K562 (cell line): ENCODE measurements at regions of chr22 and their contacts with region 1.

Region 1: DNA sequence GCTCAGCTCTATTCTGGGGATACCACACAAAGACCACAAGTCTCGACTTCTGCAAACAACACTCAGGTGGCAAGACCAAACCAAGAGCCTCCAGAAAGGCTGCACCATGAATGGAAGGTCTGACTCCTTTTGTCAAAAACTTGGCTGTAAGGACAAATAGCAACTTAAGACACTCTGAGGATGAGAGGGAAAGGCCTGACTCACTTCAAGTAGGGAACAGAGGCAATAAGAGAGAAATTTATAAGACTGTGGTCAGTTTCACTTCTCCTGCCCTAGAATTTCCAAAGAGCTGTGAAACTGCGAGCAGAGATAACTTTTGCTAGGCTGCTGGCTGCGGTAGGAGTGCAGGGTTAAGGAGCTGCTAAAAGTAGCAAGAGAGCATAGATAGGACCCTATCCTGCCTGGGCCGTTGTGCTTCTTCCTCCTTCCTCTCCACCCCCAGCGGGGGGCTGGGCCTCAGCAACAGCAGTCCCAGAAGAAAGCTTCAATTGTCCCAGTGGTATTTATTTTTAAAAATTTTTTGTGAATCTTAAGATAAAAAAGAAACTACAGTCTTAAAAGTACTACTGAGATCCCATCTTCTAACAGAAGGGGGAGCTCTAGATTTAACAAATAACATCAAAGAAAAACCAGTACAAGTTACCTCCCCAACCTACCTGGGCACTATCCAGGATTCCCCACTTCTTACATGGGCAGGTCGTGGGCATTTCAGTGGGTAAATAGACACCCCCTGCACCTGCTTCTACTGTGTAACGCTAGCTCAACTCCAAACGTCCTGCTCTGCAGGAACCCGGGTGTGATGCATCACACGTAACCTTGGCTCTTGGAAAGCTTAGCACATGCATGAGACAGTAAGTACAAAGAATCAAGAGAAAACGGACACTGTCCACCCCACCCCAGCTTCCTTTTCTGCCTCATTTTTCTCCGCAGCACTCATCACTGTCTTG is 66.4 kb downstream of the SGSM3 start:
- DNase-seq: peak; percentile 57 to 84 (median 65)
- ATAC-seq: peak; percentile 95
- H3K4me3 ChIP-seq: no peak overlapping the region
- H3K27ac ChIP-seq: peak overlapping the region; percentile 81
- H3K4me1 ChIP-seq: peaks cover 0 to 23% of the 10 kb centered on the region in 2 experiments; a peak in 4 of 5 replicates
- H3K27me3 ChIP-seq: no peaks in the 10 kb centered on the region
- CTCF ChIP-seq: peak in 2 of 3 experiments; percentile 50 to 57; a peak in 2 of 6 replicates
- EP300 ChIP-seq: peak; percentile 22; the same call in 1 of the 2 replicates
- POLR2A ChIP-seq: no peak
- RAD21 ChIP-seq: peak; percentile 59 to 64

Region 2: DNA sequence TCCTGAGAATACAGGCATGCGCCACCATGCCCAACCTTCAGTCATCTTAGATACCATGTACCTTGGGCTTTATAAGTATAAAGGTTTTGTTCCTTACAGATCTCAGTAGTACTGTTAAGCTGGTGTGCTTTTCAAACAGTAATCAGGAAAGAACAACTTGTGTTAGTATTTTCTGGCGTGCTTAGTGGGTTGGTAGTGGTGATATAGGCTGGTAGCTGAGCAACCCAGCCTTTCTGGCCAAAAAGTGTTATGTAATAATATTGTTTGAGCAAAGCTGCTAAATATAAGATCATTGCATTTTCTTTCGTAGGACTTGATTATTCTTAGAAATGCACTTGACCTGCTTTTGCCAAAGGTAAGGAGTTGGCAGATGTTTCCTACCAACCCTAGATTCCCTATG is 84.0 kb before region 1 on chr22:
- CTCF ChIA-PET with region 1: no interaction called
- POLR2A ChIA-PET with region 1: no interaction called
- in situ Hi-C with region 1: no loop called
- intact Hi-C with region 1: no loop called
- DNase-seq: no peak
- ATAC-seq: no peak
- H3K4me3 ChIP-seq: no peak overlapping the region
- H3K27ac ChIP-seq: no peak overlapping the region
- H3K4me1 ChIP-seq: peaks cover 0 to 2% of the 10 kb centered on the region in 2 experiments; a peak in 3 of 5 replicates
- H3K27me3 ChIP-seq: no peaks in the 10 kb centered on the region
- CTCF ChIP-seq: no peak
- EP300 ChIP-seq: no peak
- POLR2A ChIP-seq: no peak
- RAD21 ChIP-seq: no peak

Region 3: DNA sequence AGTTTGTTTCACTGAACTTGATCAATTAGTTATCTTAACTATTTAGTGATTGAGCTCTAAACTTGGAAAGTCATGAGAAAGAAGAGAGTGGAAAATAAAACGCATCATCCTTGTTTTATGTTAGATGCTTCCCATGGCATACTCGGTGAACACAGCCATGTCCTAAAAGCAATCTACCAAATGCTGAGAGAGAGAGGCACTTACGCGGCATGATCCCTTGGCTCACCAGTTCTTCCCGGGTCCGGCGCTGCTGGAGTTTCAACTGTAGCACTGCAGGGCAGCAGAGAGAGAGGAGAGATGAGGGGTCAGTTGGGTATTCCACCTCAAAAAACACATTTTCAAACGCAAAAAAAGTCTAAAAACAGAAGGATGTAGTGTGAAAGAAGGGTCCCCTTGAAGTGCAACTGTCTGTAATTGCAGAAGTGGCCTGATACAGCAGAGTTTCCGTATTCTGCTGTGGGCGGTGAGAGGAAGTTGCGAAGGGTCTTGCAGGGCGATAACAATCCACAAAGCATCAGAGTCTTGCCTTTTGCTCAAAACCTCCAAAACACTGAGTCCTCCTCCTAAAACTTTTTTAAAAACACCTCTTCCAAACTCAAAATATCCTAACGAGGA is 26.3 kb after region 1 on chr22:
- CTCF ChIA-PET with region 1: no interaction called
- POLR2A ChIA-PET with region 1: no interaction called
- in situ Hi-C with region 1: no loop called
- intact Hi-C with region 1: no loop called
- DNase-seq: peak in 2 of 4 experiments; percentile 28 to 59
- ATAC-seq: peak; percentile 86
- H3K4me3 ChIP-seq: peak overlapping the region; percentile 36
- H3K27ac ChIP-seq: peak overlapping the region; percentile 71
- H3K4me1 ChIP-seq: peaks cover 3 to 21% of the 10 kb centered on the region in 2 experiments; a peak in 3 of 5 replicates
- H3K27me3 ChIP-seq: no peaks in the 10 kb centered on the region
- CTCF ChIP-seq: no peak
- EP300 ChIP-seq: 0 out of 2 replicates have a peak, but pooled peaks have one; percentile 25
- POLR2A ChIP-seq: no peak
- RAD21 ChIP-seq: no peak

Region 4: DNA sequence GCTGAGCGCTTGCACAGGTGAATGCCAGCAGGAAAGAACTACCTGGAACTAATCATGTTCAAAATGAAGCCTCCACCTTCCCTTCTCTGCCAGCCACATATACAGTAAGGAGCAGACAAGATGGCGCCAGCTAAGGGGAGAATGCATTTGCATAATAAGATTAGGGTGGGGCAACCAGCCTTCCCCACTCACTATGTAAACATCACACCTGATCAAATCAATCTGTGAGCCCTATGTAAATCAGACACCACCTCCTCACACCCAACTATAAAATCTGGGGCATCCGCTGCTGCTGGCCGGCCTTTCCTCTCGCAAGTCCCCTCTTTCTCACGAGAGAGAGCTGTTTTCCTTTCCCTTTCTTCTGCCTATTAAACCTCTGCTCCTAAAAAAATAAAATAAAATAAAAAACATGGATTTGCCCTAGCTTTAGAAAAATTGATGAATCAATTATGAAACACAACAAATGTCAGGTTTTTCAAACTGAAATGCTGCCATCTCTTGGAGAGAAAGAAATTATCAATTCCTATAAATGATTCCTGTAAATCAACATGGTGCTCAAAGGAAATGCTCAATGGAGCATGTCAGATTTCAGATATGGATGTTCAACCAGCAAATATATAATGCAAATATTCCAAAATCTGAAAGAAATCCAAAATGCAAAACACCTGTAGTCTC is 42.5 kb after region 1 on chr22:
- CTCF ChIA-PET with region 1: interaction called, 4 read pairs
- POLR2A ChIA-PET with region 1: interaction called, 3 read pairs
- in situ Hi-C with region 1: no loop called
- intact Hi-C with region 1: loop called (anchors 5 kb)
- DNase-seq: no peak
- ATAC-seq: no peak
- H3K4me3 ChIP-seq: no peak overlapping the region
- H3K27ac ChIP-seq: no peak overlapping the region
- H3K4me1 ChIP-seq: peaks cover 0 to 19% of the 10 kb centered on the region in 2 experiments; a peak in 4 of 5 replicates
- H3K27me3 ChIP-seq: no peaks in the 10 kb centered on the region
- CTCF ChIP-seq: no peak
- EP300 ChIP-seq: no peak
- POLR2A ChIP-seq: no peak
- RAD21 ChIP-seq: peak in 1 of 2 experiments; percentile 20; a peak in 1 of 4 replicates

Region 5: GRCh38 chr22:40487663-40488249 is 51.0 kb after region 1 on chr22:
- CTCF ChIA-PET with region 1: interaction called, 9 read pairs
- POLR2A ChIA-PET with region 1: interaction called, 3 read pairs
- in situ Hi-C with region 1: loop called (anchors 5 kb)
- intact Hi-C with region 1: loop called (anchors 2 kb)
- DNase-seq: peak in 3 of 4 experiments; percentile 17 to 25 (median 20)
- ATAC-seq: peak; percentile 55; the same call in 1 of the 3 replicates
- H3K4me3 ChIP-seq: no peak overlapping the region
- H3K27ac ChIP-seq: no peak overlapping the region
- H3K4me1 ChIP-seq: 0 out of 5 replicates have a peak, but pooled peaks cover 0 to 8% of the 10 kb centered on the region in 2 experiments
- H3K27me3 ChIP-seq: no peaks in the 10 kb centered on the region
- CTCF ChIP-seq: peak; percentile 25 to 67 (median 58); a peak in 5 of 6 replicates
- EP300 ChIP-seq: no peak
- POLR2A ChIP-seq: no peak
- RAD21 ChIP-seq: peak; percentile 48 to 66

Region 6: GRCh38 chr22:40636380-40637182 is 199.8 kb after region 1 on chr22 and contains the start of gene MRTFA:
- CTCF ChIA-PET with region 1: no interaction called
- POLR2A ChIA-PET with region 1: interaction called, 4 read pairs
- in situ Hi-C with region 1: loop called (anchors 10 kb)
- intact Hi-C with region 1: no loop called
- DNase-seq: peak; percentile 87 to 99 (median 92)
- ATAC-seq: peak; percentile 94
- H3K4me3 ChIP-seq: peak within 1 kb of the TSS; percentile 86
- H3K27ac ChIP-seq: peak within 1 kb of the TSS; percentile 94
- H3K4me1 ChIP-seq: peaks cover 13 to 23% of the 10 kb centered on the region in 2 experiments; a peak in 4 of 5 replicates
- H3K27me3 ChIP-seq: no peaks in the 10 kb centered on the region
- CTCF ChIP-seq: no peak
- EP300 ChIP-seq: 0 out of 2 replicates have a peak, but pooled peaks have one; percentile 3
- POLR2A ChIP-seq: peak; percentile 84
- RAD21 ChIP-seq: 0 out of 4 replicates have a peak, but pooled peaks of 1 of the 2 experiments have one; percentile 6
- polyA plus RNA-seq, gene MRTFA: 0.84 to 0.97 TPM

Region 7: GRCh38 chr22:40645579-40646197 is 208.9 kb after region 1 on chr22:
- CTCF ChIA-PET with region 1: interaction called, 26 read pairs
- POLR2A ChIA-PET with region 1: no interaction called
- in situ Hi-C with region 1: loop called (anchors 10 kb)
- intact Hi-C with region 1: loop called (anchors 5 kb)
- DNase-seq: peak in 1 of 4 experiments; percentile 10
- ATAC-seq: no peak
- H3K4me3 ChIP-seq: no peak overlapping the region
- H3K27ac ChIP-seq: no peak overlapping the region
- H3K4me1 ChIP-seq: peaks cover 8 to 13% of the 10 kb centered on the region in 2 experiments; a peak in 4 of 5 replicates
- H3K27me3 ChIP-seq: no peaks in the 10 kb centered on the region
- CTCF ChIP-seq: no peak
- EP300 ChIP-seq: no peak
- POLR2A ChIP-seq: no peak
- RAD21 ChIP-seq: no peak